Sigmoid colon (tissue), 7 donors: ENCODE measurements at regions of chr15 and their contacts with region 1.

Region 1: DNA sequence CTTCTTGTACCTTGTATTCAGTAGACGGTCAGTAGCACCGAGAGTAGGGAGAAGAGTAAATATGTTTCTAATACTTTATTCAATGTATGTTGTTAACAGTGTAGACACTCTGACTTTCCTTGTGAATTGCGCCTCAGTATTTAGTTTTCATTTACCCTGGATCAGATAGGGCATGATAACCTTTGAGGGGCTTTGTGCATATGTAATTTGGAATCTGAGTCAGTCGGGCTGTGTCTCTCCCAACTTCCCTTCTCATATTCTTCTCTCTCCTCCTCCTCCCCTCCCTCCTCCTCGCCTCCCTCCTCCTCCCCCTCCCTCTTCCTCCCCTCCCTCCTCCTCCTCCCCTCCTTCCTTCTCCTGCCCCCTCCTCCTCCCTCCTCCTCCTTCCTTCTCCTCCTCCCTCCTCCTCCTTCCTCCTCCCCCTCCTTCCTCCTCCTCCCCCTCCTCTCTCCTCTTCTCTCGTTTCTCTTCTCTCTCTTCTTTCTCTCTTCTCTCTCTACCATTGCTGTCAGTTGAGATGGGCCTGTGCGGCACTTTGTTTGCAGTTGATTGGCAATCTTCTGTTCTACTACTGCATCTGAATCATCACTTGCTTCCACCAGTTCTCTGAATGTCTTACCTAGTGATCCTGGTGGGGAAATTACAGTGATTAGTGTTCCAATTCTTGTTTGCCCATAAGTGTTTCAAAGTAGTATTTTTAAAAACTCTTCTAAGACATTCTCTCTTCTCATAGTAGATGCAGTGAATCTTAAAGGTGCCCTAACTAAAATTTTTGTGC is 162.3 kb downstream of the PGPEP1L start:
- DNase-seq: no peak
- H3K4me3 ChIP-seq: no peak overlapping the region
- H3K27ac ChIP-seq: no peak overlapping the region
- H3K4me1 ChIP-seq: peaks cover 0 to 65% (median 44%) of the 10 kb centered on the region in 4 donors
- H3K27me3 ChIP-seq: no peaks in the 10 kb centered on the region
- CTCF ChIP-seq: no peak
- EP300 ChIP-seq: no peak
- POLR2A ChIP-seq: no peak

Region 2: GRCh38 chr15:98799461-98800390 is 45.6 kb before region 1 on chr15:
- intact Hi-C with region 1: loop called (anchors 5 kb)
- DNase-seq: no peak
- H3K4me3 ChIP-seq: no peak overlapping the region
- H3K27ac ChIP-seq: peak overlapping the region; percentile 59 to 77 (median 66)
- H3K4me1 ChIP-seq: peaks cover 0 to 67% (median 56%) of the 10 kb centered on the region in 4 donors
- H3K27me3 ChIP-seq: no peaks in the 10 kb centered on the region
- CTCF ChIP-seq: no peak
- EP300 ChIP-seq: no peak
- POLR2A ChIP-seq: no peak

Region 3: GRCh38 chr15:98805434-98806274 is 39.6 kb before region 1 on chr15:
- intact Hi-C with region 1: loop called (anchors 5 kb)
- DNase-seq: no peak
- H3K4me3 ChIP-seq: no peak overlapping the region
- H3K27ac ChIP-seq: peak overlapping the region in 2 of 4 donors; percentile 7 to 24
- H3K4me1 ChIP-seq: peaks cover 0 to 63% (median 57%) of the 10 kb centered on the region in 4 donors
- H3K27me3 ChIP-seq: no peaks in the 10 kb centered on the region
- CTCF ChIP-seq: peak in 1 of 4 experiments; percentile 21
- EP300 ChIP-seq: no peak
- POLR2A ChIP-seq: no peak